ENCODE measurements at regions of chr20 and their contacts with region 1.

Region 1: DNA sequence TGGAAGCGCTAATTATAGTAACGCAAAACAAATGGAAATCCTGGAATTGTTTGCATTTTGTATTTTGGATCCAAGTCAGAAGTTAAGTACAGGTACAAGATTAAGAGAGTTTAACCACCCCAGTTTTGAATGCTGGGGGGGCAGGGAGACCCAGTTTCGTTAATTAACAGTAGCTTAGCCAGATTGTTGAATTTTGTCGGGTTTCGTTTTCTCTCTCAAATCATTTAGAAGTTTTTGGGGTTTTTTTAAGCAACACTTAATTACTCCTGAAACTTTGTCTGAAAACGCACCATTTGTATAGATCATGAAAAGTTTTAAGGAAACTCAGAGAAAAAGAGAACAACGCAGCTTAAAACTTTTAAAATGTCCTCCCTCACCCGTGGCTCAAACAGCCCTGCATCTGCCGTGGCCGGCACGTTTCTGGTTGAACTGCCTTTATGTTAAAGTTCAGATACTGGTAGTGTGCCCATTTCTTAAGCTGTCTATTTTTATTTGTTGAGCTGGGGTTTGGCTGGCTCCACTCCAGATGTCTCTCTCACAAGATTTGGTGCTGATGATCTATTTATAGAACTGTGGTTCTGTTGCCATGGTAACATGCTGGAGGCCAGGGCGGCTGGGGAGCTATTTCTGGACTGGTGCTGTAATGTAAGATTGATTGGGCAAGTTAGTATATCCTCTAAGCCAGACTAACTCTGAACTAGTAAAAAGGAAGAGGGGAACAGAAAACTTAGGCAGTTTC is 55.1 kb downstream of the GNAS start:
- DNase-seq: peak; percentile 98
- ATAC-seq: peak; percentile 88
- H3K4me3 ChIP-seq: peak overlapping the region; percentile 67
- H3K27ac ChIP-seq: peak overlapping the region; percentile 96
- H3K4me1 ChIP-seq: peaks cover 54% of the 10 kb centered on the region
- H3K27me3 ChIP-seq: no peaks in the 10 kb centered on the region
- CTCF ChIP-seq: no peak
- EP300 ChIP-seq: peak; percentile 57 to 85
- POLR2A ChIP-seq: peak; percentile 71
- RAD21 ChIP-seq: no peak; the same call in 1 of the 2 replicates

Region 2: GRCh38 chr20:58839474-58839874 is 68.1 kb before region 1 on chr20:
- CTCF ChIA-PET with region 1: no interaction called
- POLR2A ChIA-PET with region 1: no interaction called
- RAD21 ChIA-PET with region 1: no interaction called
- SMC1A ChIA-PET with region 1: no interaction called
- in situ Hi-C with region 1: no loop called
- intact Hi-C with region 1: no loop called
- DNase-seq: no peak
- ATAC-seq: peak; percentile 66
- H3K4me3 ChIP-seq: no peak overlapping the region
- H3K27ac ChIP-seq: no peak overlapping the region
- H3K4me1 ChIP-seq: no peaks in the 10 kb centered on the region
- H3K27me3 ChIP-seq: peaks cover 0 to 2% of the 10 kb centered on the region in 2 experiments; a peak in 3 of 4 replicates
- CTCF ChIP-seq: peak; percentile 22 to 45 (median 40); a peak in 4 of 6 replicates
- EP300 ChIP-seq: no peak
- POLR2A ChIP-seq: no peak
- RAD21 ChIP-seq: peak; percentile 30; the same call in 1 of the 2 replicates

Region 3: GRCh38 chr20:58890518-58891085 is 17.0 kb before region 1 on chr20:
- CTCF ChIA-PET with region 1: interaction called, 4 read pairs
- POLR2A ChIA-PET with region 1: interaction called, 16 read pairs
- RAD21 ChIA-PET with region 1: interaction called, 20 read pairs
- SMC1A ChIA-PET with region 1: interaction called, 9 read pairs
- in situ Hi-C with region 1: no loop called
- intact Hi-C with region 1: loop called (anchors 2 kb)
- DNase-seq: no peak
- ATAC-seq: peak; percentile 50
- H3K4me3 ChIP-seq: peak overlapping the region; percentile 76
- H3K27ac ChIP-seq: peak overlapping the region; percentile 87
- H3K4me1 ChIP-seq: peaks cover 30% of the 10 kb centered on the region
- H3K27me3 ChIP-seq: no peaks in the 10 kb centered on the region
- CTCF ChIP-seq: no peak
- EP300 ChIP-seq: no peak
- POLR2A ChIP-seq: peak; percentile 72
- RAD21 ChIP-seq: no peak

Region 4: DNA sequence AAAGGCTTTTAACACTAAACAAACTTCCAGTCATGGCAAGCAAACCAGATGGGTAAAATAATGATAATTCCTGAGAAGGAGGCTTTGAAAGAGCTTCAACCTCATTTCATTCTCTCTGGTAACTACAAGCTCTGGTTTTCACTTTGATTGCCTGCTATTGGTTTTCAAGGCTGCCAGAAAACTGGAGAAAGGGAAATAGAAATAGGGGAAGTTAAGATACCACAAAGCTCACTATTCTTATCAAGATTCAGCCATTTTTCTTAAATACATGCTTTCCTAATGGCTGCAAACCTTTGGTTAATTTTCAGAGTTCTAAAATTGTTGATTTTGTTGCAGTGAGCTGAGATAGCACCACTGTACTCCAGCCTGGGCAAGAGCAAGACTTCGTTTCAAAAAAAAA is 31.0 kb after region 1 on chr20:
- CTCF ChIA-PET with region 1: interaction called, 3 read pairs
- POLR2A ChIA-PET with region 1: interaction called, 3 read pairs
- RAD21 ChIA-PET with region 1: interaction called, 4 read pairs
- SMC1A ChIA-PET with region 1: interaction called, 16 read pairs
- in situ Hi-C with region 1: no loop called
- intact Hi-C with region 1: no loop called
- DNase-seq: no peak
- ATAC-seq: no peak
- H3K4me3 ChIP-seq: peak overlapping the region; percentile 7; the same call in 1 of the 2 replicates
- H3K27ac ChIP-seq: no peak overlapping the region
- H3K4me1 ChIP-seq: peaks cover 10% of the 10 kb centered on the region; the same call in 1 of the 2 replicates
- H3K27me3 ChIP-seq: no peaks in the 10 kb centered on the region
- CTCF ChIP-seq: no peak
- EP300 ChIP-seq: no peak
- POLR2A ChIP-seq: no peak
- RAD21 ChIP-seq: no peak

Region 5: GRCh38 chr20:58980700-58981627 is 73.4 kb after region 1 on chr20 and contains the start of gene NELFCD:
- CTCF ChIA-PET with region 1: interaction called, 8 read pairs
- POLR2A ChIA-PET with region 1: interaction called, 11 read pairs
- RAD21 ChIA-PET with region 1: interaction called, 25 read pairs
- SMC1A ChIA-PET with region 1: interaction called, 16 read pairs
- in situ Hi-C with region 1: loop called (anchors 5 kb)
- intact Hi-C with region 1: loop called (anchors 2 kb)
- DNase-seq: no peak
- ATAC-seq: peak; percentile 68
- H3K4me3 ChIP-seq: peak within 1 kb of the TSS; percentile 99
- H3K27ac ChIP-seq: peak within 1 kb of the TSS; percentile 87
- H3K4me1 ChIP-seq: peaks cover 38% of the 10 kb centered on the region
- H3K27me3 ChIP-seq: no peaks in the 10 kb centered on the region
- CTCF ChIP-seq: no peak
- EP300 ChIP-seq: no peak
- POLR2A ChIP-seq: peak; percentile 91
- RAD21 ChIP-seq: no peak
- polyA plus RNA-seq, gene NELFCD: 8.9 to 16.7 TPM

Region 6: DNA sequence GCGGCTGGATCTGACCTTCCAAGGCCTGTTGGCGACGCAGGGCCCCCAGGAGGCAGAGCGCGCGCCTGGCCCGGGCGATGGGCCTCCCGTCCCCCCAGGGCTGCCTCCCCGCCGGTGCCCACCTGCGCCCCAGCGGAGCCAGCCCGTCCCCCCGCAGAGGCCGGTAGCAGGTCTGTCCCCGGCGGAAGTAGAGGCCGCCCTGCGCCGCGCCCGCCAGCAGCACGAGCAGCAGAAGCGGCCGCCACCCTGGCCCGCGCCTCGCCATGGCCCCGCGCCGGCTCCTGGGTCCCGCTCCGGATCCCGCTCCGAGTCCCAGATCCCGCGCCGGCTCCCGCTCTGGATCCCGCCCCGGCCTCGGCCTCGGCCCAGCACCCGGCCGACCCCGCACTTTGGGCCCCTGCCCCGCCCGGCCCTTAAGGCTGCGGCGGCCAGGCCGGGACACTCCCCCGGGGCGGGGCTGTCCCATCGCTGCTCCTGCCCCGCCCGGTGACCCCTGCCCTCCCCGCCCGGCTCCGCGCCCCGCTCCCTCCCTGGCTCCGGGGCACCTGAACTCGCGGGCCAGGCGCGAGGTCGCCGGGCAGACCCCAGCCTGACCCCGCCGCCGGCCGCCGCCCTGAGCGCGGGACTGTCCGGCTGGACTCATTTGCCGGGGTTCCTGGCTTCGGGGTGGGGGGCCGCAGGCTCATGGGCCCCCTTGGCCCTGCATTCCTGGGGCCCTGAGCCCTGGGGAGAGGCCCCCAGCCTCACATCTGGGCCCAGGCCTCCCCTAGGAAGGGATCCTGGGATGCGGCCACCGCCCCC is 99.5 kb after region 1 on chr20 and contains the start of gene CTSZ:
- CTCF ChIA-PET with region 1: interaction called, 4 read pairs
- POLR2A ChIA-PET with region 1: interaction called, 9 read pairs
- RAD21 ChIA-PET with region 1: interaction called, 11 read pairs
- SMC1A ChIA-PET with region 1: interaction called, 14 read pairs
- in situ Hi-C with region 1: no loop called
- intact Hi-C with region 1: loop called (anchors 1 kb)
- DNase-seq: no peak
- ATAC-seq: peak; percentile 52
- H3K4me3 ChIP-seq: peak within 1 kb of the TSS; percentile 92
- H3K27ac ChIP-seq: peak within 1 kb of the TSS; percentile 95
- H3K4me1 ChIP-seq: peaks cover 35% of the 10 kb centered on the region
- H3K27me3 ChIP-seq: no peaks in the 10 kb centered on the region
- CTCF ChIP-seq: no peak
- EP300 ChIP-seq: no peak
- POLR2A ChIP-seq: peak; percentile 70
- RAD21 ChIP-seq: no peak
- polyA plus RNA-seq, gene CTSZ: 6.0 to 14.0 TPM

Region 7: GRCh38 chr20:59042796-59043660 is 135.5 kb after region 1 on chr20:
- CTCF ChIA-PET with region 1: interaction called, 3 read pairs
- POLR2A ChIA-PET with region 1: interaction called, 12 read pairs
- RAD21 ChIA-PET with region 1: interaction called, 3 read pairs
- SMC1A ChIA-PET with region 1: interaction called, 8 read pairs
- in situ Hi-C with region 1: no loop called
- intact Hi-C with region 1: no loop called
- DNase-seq: peak; percentile 61
- ATAC-seq: peak; percentile 96
- H3K4me3 ChIP-seq: peak overlapping the region; percentile 89
- H3K27ac ChIP-seq: peak overlapping the region; percentile 87
- H3K4me1 ChIP-seq: peaks cover 13% of the 10 kb centered on the region
- H3K27me3 ChIP-seq: no peaks in the 10 kb centered on the region
- CTCF ChIP-seq: no peak
- EP300 ChIP-seq: no peak
- POLR2A ChIP-seq: peak; percentile 78
- RAD21 ChIP-seq: no peak